Heart right ventricle (tissue), 16 donors: ENCODE measurements at regions of chr19 and their contacts with region 1.

Region 1: DNA sequence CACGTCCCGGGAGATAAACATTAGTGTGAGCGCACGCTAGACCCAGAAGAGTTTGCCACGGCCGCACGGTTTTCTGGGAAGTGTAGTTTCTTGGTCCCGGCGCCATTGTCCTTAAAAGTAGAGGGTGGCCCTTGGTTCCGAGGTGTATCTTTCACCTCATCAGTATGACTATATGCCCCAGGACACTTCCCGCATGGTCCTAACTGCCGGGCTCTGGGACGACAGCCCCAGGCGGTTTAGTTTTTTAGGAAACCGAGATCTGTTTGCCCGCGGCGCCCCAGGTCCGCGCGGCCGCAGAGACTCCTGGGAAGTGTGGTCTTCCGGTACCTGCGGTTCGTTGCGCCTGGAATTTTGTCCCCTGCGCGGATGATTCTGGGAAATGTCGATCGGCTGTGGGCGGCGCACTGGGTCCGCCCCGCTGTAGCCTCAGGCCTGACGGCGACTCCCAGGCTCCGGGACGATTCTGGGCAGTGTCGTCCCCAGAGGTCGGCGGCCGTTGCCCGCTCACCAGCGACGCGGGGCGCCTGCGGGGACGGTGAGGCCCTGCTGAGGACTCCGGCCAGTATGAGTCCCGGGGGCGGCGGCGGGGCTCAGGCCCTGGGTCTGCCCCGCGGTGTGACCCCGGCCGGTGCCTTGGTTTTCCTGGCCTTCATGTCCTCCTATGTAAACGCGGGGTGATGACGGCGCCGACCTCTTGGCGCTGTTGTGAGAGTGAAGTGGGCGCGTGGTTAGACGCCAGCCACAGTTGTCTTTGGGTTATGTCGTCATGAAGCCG is at the start of gene ZNF181:
- DNase-seq: peak; percentile 86 to 92
- ATAC-seq: peak; percentile 91 to 98 (median 96)
- H3K4me3 ChIP-seq: peak within 1 kb of the TSS; percentile 45 to 93 (median 81)
- H3K27ac ChIP-seq: peak within 1 kb of the TSS; percentile 91 to 100 (median 98)
- H3K4me1 ChIP-seq: peaks cover 2 to 48% (median 26%) of the 10 kb centered on the region in 9 donors
- H3K27me3 ChIP-seq: no peaks in the 10 kb centered on the region
- CTCF ChIP-seq: no peak
- total RNA-seq, gene ZNF181: 16.4 to 27.6 (median 19.2) TPM

Region 2: GRCh38 chr19:34639491-34640085 is 94.4 kb before region 1 on chr19:
- intact Hi-C with region 1: no loop called
- DNase-seq: peak in 1 of 2 donors; percentile 61
- ATAC-seq: peak in 5 of 8 donors; percentile 49 to 67 (median 57)
- H3K4me3 ChIP-seq: no peak overlapping the region
- H3K27ac ChIP-seq: no peak overlapping the region
- H3K4me1 ChIP-seq: no peaks in the 10 kb centered on the region
- H3K27me3 ChIP-seq: no peaks in the 10 kb centered on the region
- CTCF ChIP-seq: peak; percentile 68 to 90 (median 85)

Region 3: GRCh38 chr19:34677386-34678084 is 56.5 kb before region 1 on chr19 and contains the start of gene ZNF302:
- intact Hi-C with region 1: loop called in 6 of 10 experiments (anchors 2 to 5 kb)
- DNase-seq: peak; percentile 96 to 97
- ATAC-seq: peak; percentile 99 to 100 (median 99)
- H3K4me3 ChIP-seq: peak within 1 kb of the TSS; percentile 65 to 90 (median 83)
- H3K27ac ChIP-seq: peak within 1 kb of the TSS; percentile 95 to 99 (median 98)
- H3K4me1 ChIP-seq: peaks cover 5 to 39% (median 20%) of the 10 kb centered on the region in 9 donors
- H3K27me3 ChIP-seq: no peaks in the 10 kb centered on the region
- CTCF ChIP-seq: no peak
- total RNA-seq, gene ZNF302: 29.1 to 42.5 (median 32.6) TPM

Region 4: GRCh38 chr19:34712395-34713261 is 21.4 kb before region 1 on chr19:
- intact Hi-C with region 1: no loop called
- DNase-seq: peak in 1 of 2 donors; percentile 76
- ATAC-seq: peak; percentile 68 to 82 (median 74)
- H3K4me3 ChIP-seq: no peak overlapping the region
- H3K27ac ChIP-seq: no peak overlapping the region
- H3K4me1 ChIP-seq: peaks cover 0 to 6% (median 0%) of the 10 kb centered on the region in 9 donors
- H3K27me3 ChIP-seq: peaks cover 0 to 9% (median 0%) of the 10 kb centered on the region in 7 donors
- CTCF ChIP-seq: peak; percentile 76 to 87 (median 85)

Region 5: DNA sequence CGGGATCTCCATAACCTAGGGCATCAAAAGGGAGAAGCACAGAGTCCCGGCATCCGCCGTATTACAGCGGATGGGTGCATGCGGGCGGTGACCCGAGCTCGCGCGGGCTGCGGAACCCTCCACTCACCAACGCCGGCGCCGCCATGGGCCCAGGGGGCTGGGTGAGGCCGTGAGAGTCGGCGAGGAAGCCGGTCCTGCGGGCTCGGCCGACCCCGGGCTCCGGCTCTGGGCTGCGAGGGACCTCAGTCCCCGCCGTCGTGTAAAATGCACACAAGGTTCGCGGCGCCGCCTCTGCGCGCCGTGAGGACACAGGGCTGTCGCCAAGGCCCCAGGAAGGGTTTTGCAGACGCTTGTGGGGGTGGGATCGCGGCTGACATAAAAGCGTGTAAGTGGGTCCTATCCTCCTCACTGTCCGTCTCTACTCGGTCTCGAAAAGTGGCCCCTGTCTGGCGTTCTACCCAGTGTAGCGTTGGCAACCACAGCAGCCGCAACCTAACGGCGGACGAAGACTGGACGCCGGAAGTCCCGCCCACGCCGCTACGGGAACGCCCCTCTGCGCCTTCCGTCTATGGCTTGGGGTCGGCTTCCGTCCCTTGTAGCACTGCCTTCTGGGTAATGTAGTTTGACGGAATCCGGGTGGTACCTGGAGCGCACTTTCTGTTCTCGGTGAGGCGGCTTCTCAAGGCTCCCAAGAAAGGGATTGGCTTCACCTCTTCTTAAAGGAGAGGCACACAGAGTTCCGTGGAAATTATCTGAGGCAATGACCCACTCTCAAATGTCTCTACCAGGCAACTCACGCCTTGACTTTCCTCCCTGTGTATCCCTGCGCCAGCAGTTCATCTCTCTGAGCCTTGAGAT is 38.9 kb after region 1 on chr19 and contains the start of gene ZNF599:
- intact Hi-C with region 1: loop called in 2 of 10 experiments (anchors 5 kb)
- DNase-seq: peak; percentile 92 to 93
- ATAC-seq: peak; percentile 98 to 100 (median 100)
- H3K4me3 ChIP-seq: peak within 1 kb of the TSS; percentile 48 to 95 (median 88)
- H3K27ac ChIP-seq: peak within 1 kb of the TSS; percentile 31 to 91 (median 87)
- H3K4me1 ChIP-seq: peaks cover 0 to 17% (median 8%) of the 10 kb centered on the region in 9 donors
- H3K27me3 ChIP-seq: peaks cover 0 to 10% (median 0%) of the 10 kb centered on the region in 7 donors
- CTCF ChIP-seq: no peak
- total RNA-seq, gene ZNF599: 2.6 to 5.0 (median 3.5) TPM

Region 6: GRCh38 chr19:34926685-34927375 is 192.8 kb after region 1 on chr19 and contains the start of gene ZNF30:
- intact Hi-C with region 1: loop called in 1 of 10 experiments (anchors 2 kb)
- DNase-seq: peak; percentile 92 to 94
- ATAC-seq: peak; percentile 99 to 100 (median 100)
- H3K4me3 ChIP-seq: peak within 1 kb of the TSS; percentile 52 to 79 (median 67)
- H3K27ac ChIP-seq: peak within 1 kb of the TSS; percentile 16 to 86 (median 82)
- H3K4me1 ChIP-seq: peaks cover 0 to 22% (median 10%) of the 10 kb centered on the region in 9 donors
- H3K27me3 ChIP-seq: peaks cover 0 to 11% (median 0%) of the 10 kb centered on the region in 7 donors
- CTCF ChIP-seq: peak in 2 of 9 donors; percentile 4 to 6
- total RNA-seq, gene ZNF30: 1.6 to 4.5 (median 2.6) TPM